Mammary epithelial cell (primary cell): ENCODE measurements at regions of chr2 and their contacts with region 1.

Region 1: DNA sequence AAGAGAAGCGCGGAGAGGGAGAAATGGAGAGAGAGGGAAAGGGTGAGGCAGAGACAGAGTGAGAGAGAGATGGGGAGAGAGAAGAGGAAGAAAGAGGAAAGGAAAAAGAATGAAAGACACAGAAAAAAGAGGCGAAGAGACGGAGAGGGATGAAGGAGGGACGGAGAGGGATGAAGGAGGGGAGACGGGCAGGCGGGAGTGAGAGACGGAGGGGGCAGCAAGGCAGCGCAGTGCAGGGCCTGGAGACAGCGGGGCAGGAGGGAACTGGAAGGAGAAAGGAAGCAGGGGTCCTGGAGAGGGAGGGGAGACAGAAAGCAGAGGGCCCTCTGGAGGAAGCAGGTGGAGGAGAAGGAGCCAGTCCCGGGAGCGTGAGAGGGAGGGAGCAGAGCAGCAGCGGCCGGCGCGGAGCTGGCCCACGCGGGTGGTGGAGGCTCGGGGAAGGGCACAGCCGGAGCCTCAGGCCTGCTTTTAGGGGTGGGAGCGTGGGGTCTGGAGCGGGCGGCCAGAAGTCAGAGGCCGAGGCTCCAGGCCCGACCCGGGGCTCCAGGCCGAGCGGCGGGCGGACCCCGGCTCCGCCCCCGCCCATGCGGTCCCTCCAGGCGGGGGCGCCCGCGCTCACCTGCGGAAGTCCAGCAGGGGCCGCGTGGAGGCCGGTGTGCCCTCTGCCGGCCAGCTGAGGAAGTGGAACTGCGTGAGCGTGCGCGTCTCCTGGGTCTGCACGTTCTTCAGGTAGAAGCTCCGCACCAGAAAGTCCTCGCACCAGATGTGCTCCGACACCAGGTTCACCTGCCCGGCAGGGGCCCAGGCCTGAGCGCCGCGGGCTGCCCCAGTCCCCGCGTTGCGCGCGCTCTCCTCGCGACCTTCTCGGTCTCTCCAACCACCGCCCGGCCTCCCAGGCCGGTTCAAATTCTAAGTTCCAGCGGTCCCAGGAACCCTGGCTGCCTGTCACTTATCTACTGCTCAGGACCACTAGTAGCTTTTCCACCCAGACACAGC is 14.5 kb downstream of the PTPRN start:
- DNase-seq: peak; percentile 70
- H3K4me3 ChIP-seq: peak overlapping the region in 2 of 3 experiments; percentile 46 to 55
- H3K27ac ChIP-seq: no peak overlapping the region
- H3K4me1 ChIP-seq: peaks cover 17% of the 10 kb centered on the region
- H3K27me3 ChIP-seq: no peaks in the 10 kb centered on the region
- CTCF ChIP-seq: peak; percentile 91 to 92

Region 2: DNA sequence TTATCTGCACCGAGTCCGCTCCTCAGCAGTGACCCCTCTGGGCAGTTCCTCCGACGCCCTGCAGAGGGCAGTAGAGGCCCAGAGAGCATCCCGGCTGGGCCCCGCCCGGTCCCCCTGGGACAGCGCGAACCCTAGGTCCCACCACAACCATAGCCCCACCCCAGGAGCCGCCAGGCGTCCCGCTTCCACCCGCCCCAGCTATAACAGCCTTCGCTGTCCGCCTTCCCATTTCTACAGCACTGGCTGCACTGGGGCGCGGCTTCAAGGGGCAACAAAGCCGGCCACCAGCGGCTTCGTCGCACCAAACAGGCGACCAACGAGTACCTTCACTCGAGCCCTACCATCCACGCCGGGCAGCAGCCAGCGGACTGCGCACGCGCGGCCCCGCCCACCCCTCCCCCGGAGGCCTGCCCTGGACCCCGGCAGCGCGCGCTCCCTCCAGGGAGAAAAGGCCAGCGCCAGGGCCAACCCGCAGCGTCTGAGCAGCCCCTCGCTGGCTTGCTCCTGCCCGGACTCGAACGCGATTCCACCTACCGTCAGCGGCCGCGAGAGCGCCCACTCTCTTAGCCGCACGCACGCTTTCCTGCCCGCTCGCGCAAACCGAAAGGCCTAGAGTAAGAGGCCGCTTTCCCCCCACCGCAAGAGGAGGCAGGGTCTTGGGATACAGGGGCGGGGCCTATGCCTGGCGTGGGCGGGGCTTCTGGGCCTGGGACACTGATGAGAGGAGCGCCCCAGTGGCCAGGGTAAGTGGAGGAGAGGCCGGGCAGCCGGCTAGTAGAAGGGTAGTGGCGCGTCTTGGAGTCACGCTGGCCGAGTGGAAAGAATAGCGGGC is 134.3 kb before region 1 on chr2 and contains the start of gene NHEJ1:
- CTCF ChIA-PET with region 1: no interaction called
- dilution Hi-C with region 1: no loop called
- in situ Hi-C with region 1: loop called (anchors 10 kb)
- intact Hi-C with region 1: loop called (anchors 1 kb)
- DNase-seq: peak; percentile 88
- H3K4me3 ChIP-seq: peak within 1 kb of the TSS; percentile 74 to 91 (median 79)
- H3K27ac ChIP-seq: peak within 1 kb of the TSS; percentile 19
- H3K4me1 ChIP-seq: peaks cover 15% of the 10 kb centered on the region
- H3K27me3 ChIP-seq: no peaks in the 10 kb centered on the region
- CTCF ChIP-seq: peak; percentile 84 to 96
- total RNA-seq, gene NHEJ1: 10.4 to 13.3 TPM

Region 3: GRCh38 chr2:219206442-219207253 is 88.0 kb before region 1 on chr2 and contains the start of gene ZFAND2B:
- CTCF ChIA-PET with region 1: no interaction called
- dilution Hi-C with region 1: no loop called
- in situ Hi-C with region 1: no loop called
- intact Hi-C with region 1: loop called (anchors 1 kb)
- DNase-seq: peak; percentile 93
- H3K4me3 ChIP-seq: peak within 1 kb of the TSS; percentile 62 to 88 (median 74)
- H3K27ac ChIP-seq: peak within 1 kb of the TSS; percentile 36
- H3K4me1 ChIP-seq: peaks cover 17% of the 10 kb centered on the region
- H3K27me3 ChIP-seq: no peaks in the 10 kb centered on the region
- CTCF ChIP-seq: no peak
- total RNA-seq, gene ZFAND2B: 23.7 to 33.8 TPM

Region 4: DNA sequence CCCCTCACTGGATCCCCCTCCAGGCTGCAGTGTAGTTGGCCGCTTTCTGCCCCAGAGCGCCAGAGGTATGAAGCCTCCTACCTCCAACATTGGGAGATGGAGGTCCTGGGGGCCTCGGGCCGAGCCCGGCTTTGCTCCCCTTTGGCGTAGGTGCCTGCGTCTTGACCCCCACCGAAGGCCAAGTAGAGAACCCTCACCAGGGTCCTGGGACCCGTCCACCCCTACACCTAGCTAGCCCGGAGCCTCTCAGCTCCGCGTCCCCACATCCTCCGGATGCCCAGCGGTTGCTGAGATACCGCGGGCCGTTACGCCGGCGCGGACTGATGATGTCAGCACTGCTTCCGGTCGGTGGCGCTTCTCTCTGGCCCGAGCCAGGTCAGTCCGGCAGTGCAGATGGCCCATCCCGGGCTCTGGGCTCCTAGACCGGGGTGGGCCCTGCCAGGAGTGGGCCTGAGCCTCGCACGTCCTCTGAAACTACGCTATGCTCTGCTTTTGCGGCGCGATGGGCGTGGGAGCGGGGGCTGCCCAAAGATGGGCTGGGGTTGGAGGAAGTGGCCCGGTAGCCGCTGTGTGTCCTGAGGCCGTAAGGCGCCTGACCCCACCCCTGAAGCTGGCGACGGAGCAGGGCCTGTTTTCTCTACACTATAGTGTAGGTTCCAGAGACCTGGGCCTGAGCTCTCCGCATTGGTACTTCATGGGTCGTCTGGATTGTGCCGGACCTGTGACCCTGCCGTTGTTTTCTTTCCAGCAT is 49.3 kb before region 1 on chr2 and contains the starts of genes GLB1L and STK16:
- CTCF ChIA-PET with region 1: no interaction called
- dilution Hi-C with region 1: loop called (anchors 5 kb)
- in situ Hi-C with region 1: no loop called
- intact Hi-C with region 1: loop called (anchors 1 kb)
- DNase-seq: peak; percentile 85
- H3K4me3 ChIP-seq: peak within 1 kb of the TSS; percentile 67 to 98 (median 82)
- H3K27ac ChIP-seq: peak within 1 kb of the TSS; percentile 88
- H3K4me1 ChIP-seq: peaks cover 46% of the 10 kb centered on the region
- H3K27me3 ChIP-seq: no peaks in the 10 kb centered on the region
- CTCF ChIP-seq: no peak
- total RNA-seq, gene GLB1L: 5.5 to 21.8 TPM
- total RNA-seq, gene STK16: 26.9 to 29.8 TPM

Region 5: DNA sequence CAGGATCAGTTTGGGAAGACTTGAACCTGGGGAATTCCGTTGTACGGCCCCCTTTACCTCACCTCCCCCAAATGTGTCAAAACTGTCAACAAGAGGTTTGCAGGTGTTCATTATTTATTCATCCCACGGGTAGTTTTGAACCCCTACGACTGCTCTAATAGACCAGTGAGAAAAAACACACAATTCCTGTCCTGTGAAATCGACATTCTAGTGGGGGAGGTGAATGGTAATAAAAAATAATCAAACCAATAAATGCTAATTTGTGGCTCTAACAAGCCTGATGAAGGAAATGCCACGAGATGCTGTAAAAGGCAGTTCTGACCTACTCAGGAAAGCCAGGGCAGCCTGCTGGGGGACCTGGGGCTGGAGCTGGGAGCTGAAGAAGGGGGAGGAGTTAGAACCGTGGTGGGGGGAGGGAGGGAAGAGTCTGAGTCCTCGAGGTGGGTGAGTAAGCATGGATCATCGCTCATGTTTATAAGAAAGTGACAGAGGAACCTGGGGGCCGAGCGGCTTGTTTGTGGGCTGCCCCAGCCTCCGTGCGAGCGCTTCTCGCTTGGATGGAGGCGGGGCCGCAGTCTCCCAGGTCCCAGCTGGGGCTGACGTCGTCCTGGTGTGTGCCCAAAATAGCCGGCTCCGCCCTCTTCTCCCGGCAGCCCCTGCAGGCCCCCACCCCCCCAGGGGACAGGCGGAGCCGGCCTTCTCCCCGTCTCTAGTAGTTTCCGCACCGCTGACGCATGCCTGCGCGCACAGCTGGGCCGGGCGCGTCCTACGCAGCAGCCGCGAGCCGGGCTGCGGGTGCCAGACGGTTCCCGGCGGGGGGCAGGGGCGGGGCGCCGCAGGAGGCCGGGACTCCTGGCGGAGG is 15.8 kb before region 1 on chr2 and contains the start of gene DNAJB2:
- CTCF ChIA-PET with region 1: interaction called, 10 read pairs
- dilution Hi-C with region 1: no loop called
- in situ Hi-C with region 1: no loop called
- intact Hi-C with region 1: loop called (anchors 1 kb)
- DNase-seq: peak; percentile 99
- H3K4me3 ChIP-seq: peak within 1 kb of the TSS; percentile 62 to 70 (median 62)
- H3K27ac ChIP-seq: peak within 1 kb of the TSS; percentile 80
- H3K4me1 ChIP-seq: peaks cover 45% of the 10 kb centered on the region
- H3K27me3 ChIP-seq: no peaks in the 10 kb centered on the region
- CTCF ChIP-seq: no peak
- total RNA-seq, gene DNAJB2: 58.9 to 110 TPM

Region 6: GRCh38 chr2:219352448-219353023 is 57.9 kb after region 1 on chr2:
- CTCF ChIA-PET with region 1: no interaction called
- dilution Hi-C with region 1: no loop called
- in situ Hi-C with region 1: no loop called
- intact Hi-C with region 1: loop called (anchors 2 kb)
- DNase-seq: peak; percentile 51
- H3K4me3 ChIP-seq: no peak overlapping the region
- H3K27ac ChIP-seq: no peak overlapping the region
- H3K4me1 ChIP-seq: no peaks in the 10 kb centered on the region
- H3K27me3 ChIP-seq: no peaks in the 10 kb centered on the region
- CTCF ChIP-seq: peak; percentile 73 to 75